Right lobe of liver (tissue), 6 donors: ENCODE measurements at regions of chr10 and their contacts with region 1.

Region 1: GRCh38 chr10:97278491-97278989 is 13.9 kb downstream of the ARHGAP19 start:
- DNase-seq: no peak
- ATAC-seq: peak; percentile 89 to 97 (median 92)
- H3K4me3 ChIP-seq: no peak overlapping the region
- H3K27ac ChIP-seq: peak overlapping the region; percentile 18 to 68 (median 54)
- H3K4me1 ChIP-seq: peaks cover 0 to 11% (median 7%) of the 10 kb centered on the region in 4 donors
- H3K27me3 ChIP-seq: no peaks in the 10 kb centered on the region
- CTCF ChIP-seq: peak; percentile 66 to 77 (median 70)
- POLR2A ChIP-seq: no peak

Region 2: DNA sequence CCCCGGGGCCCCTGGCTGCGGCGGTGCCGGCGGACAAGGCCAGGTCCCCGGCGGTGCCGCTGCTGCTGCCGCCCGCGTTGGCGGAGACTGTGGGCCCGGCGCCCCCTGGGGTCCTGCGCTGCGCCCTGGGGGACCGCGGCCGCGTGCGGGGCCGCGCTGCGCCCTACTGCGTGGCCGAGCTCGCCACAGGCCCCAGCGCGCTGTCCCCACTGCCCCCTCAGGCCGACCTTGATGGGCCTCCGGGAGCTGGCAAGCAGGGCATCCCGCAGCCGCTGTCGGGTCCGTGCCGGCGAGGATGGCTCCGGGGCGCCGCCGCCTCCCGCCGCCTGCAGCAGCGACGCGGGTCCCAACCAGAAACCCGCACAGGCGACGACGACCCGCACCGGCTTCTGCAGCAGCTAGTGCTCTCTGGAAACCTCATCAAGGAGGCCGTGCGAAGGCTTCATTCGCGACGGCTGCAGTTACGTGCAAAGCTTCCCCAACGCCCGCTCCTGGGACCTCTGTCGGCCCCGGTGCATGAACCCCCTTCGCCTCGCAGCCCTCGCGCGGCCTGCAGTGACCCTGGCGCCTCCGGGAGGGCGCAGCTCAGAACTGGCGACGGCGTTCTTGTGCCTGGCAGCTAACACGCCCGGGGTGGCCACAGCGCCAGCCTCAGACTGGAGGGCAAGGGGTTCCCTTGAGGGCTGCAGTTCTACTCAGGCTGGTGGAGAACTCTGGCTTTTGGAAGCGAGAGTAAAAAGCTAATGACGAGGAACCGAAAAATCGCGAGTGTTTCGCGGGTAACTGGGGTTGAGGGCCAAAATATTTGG is 41.3 kb after region 1 on chr10:
- intact Hi-C with region 1: loop called in 1 of 2 experiments (anchors 10 kb)
- DNase-seq: peak; percentile 80 to 87 (median 84)
- ATAC-seq: peak; percentile 49 to 70 (median 66)
- H3K4me3 ChIP-seq: peak overlapping the region; percentile 70 to 77 (median 72)
- H3K27ac ChIP-seq: peak overlapping the region; percentile 99 to 100 (median 100)
- H3K4me1 ChIP-seq: peaks cover 0 to 18% (median 3%) of the 10 kb centered on the region in 4 donors
- H3K27me3 ChIP-seq: no peaks in the 10 kb centered on the region
- CTCF ChIP-seq: peak in 2 of 4 donors; percentile 13 to 15
- POLR2A ChIP-seq: peak; percentile 63

Region 3: GRCh38 chr10:97334370-97335175 is 56.0 kb after region 1 on chr10 and contains the start of gene FRAT2:
- intact Hi-C with region 1: loop called (anchors 10 kb)
- DNase-seq: peak; percentile 95 to 96 (median 95)
- ATAC-seq: peak; percentile 85 to 94 (median 90)
- H3K4me3 ChIP-seq: peak within 1 kb of the TSS; percentile 77 to 85 (median 84)
- H3K27ac ChIP-seq: peak within 1 kb of the TSS; percentile 94 to 99 (median 95)
- H3K4me1 ChIP-seq: peaks cover 0 to 22% (median under 1%) of the 10 kb centered on the region in 4 donors
- H3K27me3 ChIP-seq: no peaks in the 10 kb centered on the region
- CTCF ChIP-seq: no peak
- POLR2A ChIP-seq: peak; percentile 95
- total RNA-seq, gene FRAT2: 8.3 to 11.4 (median 9.7) TPM